MCF 10A (cell line): ENCODE measurements at regions of chr11 and their contacts with region 1.

Region 1: GRCh38 chr11:102268329-102269193 is 48.7 kb upstream of the BIRC3 start:
- DNase-seq: peak; percentile 96
- H3K4me3 Mint-ChIP-seq: peak overlapping the region; percentile 80
- H3K27ac Mint-ChIP-seq: peak overlapping the region; percentile 93
- H3K4me1 Mint-ChIP-seq: peaks cover 28% of the 10 kb centered on the region
- H3K27me3 Mint-ChIP-seq: no peaks in the 10 kb centered on the region
- CTCF ChIP-seq: peak; percentile 37

Region 2: DNA sequence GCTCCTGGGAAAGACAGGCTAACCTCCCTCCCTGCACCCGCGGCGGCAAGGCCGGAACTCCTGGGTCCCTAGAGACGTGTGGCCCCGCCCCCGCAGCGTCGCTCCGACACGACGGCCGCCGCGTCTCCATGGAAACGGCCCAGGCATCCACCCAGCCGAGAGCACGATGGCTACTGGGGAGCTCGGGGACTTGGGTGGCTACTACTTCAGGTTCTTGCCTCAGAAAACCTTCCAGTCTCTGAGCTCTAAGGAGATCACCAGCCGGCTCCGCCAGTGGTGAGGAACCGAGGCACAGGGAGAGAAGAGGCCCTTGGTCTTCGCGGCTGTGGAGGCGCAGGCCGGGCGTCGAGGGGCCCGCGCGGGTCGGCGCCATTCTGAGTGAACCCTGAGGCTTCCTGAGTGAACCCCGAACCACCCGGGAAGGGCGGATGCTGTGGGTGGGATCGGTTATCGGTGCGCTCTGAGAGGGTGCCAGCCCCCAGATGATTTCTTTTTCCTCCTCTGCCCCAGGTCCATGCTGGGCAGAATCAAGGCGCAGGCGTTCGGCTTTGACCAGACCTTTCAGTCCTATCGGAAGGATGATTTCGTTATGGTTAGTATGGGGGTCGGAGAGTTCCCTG is 221.1 kb before region 1 on chr11 and contains the start of gene CFAP300:
- CTCF ChIA-PET with region 1: interaction called, 4 read pairs
- POLR2A ChIA-PET with region 1: interaction called, 11 read pairs
- intact Hi-C with region 1: loop called (anchors 2 kb)
- DNase-seq: peak; percentile 75
- H3K4me3 Mint-ChIP-seq: peak within 1 kb of the TSS; percentile 85
- H3K27ac Mint-ChIP-seq: peak within 1 kb of the TSS; percentile 95
- H3K4me1 Mint-ChIP-seq: peaks cover 5% of the 10 kb centered on the region
- H3K27me3 Mint-ChIP-seq: no peaks in the 10 kb centered on the region
- CTCF ChIP-seq: no peak
- total RNA-seq, gene CFAP300: 8.0 and 12.9 TPM in 2 replicates

Region 3: DNA sequence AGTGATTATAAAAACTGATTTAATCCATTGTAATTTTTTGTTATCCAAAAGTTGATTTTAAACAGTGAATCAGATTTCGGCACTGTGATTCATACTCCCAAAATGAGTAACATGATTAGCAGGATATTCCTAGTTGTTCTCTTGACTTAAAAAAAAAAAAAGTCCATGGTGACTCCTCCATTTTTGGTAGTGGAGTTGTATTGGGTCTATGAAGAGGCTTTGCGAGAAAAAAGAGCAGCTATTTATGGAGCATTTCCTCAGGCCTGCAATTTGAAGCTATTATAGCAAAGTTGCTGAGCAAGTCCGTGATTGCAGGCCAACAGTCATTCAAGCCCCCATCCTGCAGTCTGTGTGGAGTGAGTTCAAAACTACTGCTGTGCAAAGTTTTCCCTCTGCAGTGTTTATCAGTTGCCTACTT is 129.5 kb before region 1 on chr11:
- CTCF ChIA-PET with region 1: interaction called, 5 read pairs
- POLR2A ChIA-PET with region 1: interaction called, 13 read pairs
- intact Hi-C with region 1: no loop called
- DNase-seq: peak; percentile 72
- H3K4me3 Mint-ChIP-seq: peak overlapping the region; percentile 55
- H3K27ac Mint-ChIP-seq: peak overlapping the region; percentile 91
- H3K4me1 Mint-ChIP-seq: peaks cover 30% of the 10 kb centered on the region
- H3K27me3 Mint-ChIP-seq: no peaks in the 10 kb centered on the region
- CTCF ChIP-seq: no peak

Region 4: DNA sequence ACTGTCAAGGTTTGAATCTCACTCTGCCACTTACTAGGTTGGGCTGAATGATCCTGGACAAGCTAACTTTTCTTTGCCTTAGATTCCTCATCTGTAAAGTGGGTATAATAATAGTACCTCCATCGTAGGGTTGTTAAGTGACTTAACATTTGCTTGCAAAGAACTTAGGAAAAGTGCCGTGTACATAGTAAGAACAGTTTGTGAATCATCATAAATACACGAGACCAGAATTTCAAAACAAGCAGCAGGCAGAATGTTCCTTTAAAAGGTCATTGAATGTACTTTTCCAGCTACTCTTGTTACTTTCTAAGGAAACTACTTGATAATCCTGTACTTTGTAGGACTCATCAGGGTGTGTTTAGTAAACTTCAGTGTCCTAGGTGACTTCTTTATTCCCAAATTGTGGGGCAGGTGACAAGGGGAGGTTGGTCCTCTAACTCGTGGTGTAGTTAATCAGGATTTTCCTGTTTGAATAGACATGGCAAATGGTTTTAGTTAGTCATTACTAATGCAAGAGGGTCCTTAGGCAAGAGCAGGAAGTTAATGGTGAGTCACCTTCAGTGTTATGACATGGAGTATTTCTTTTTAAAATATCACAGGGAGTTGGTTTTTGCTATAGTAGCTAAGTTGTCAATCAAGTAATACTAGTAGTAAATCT is 90.5 kb before region 1 on chr11:
- CTCF ChIA-PET with region 1: interaction called, 6 read pairs
- POLR2A ChIA-PET with region 1: interaction called, 46 read pairs
- intact Hi-C with region 1: no loop called
- DNase-seq: peak; percentile 92
- H3K4me3 Mint-ChIP-seq: peak overlapping the region; percentile 49
- H3K27ac Mint-ChIP-seq: peak overlapping the region; percentile 17
- H3K4me1 Mint-ChIP-seq: peaks cover 38% of the 10 kb centered on the region
- H3K27me3 Mint-ChIP-seq: no peaks in the 10 kb centered on the region
- CTCF ChIP-seq: no peak

Region 5: GRCh38 chr11:102244681-102245409 is 23.7 kb before region 1 on chr11:
- CTCF ChIA-PET with region 1: interaction called, 10 read pairs
- POLR2A ChIA-PET with region 1: interaction called, 13 read pairs
- intact Hi-C with region 1: no loop called
- DNase-seq: peak; percentile 95
- H3K4me3 Mint-ChIP-seq: no peak overlapping the region
- H3K27ac Mint-ChIP-seq: peak overlapping the region; percentile 74
- H3K4me1 Mint-ChIP-seq: peaks cover 16% of the 10 kb centered on the region
- H3K27me3 Mint-ChIP-seq: no peaks in the 10 kb centered on the region
- CTCF ChIP-seq: no peak

Region 6: GRCh38 chr11:102293873-102294601 is 25.5 kb after region 1 on chr11:
- CTCF ChIA-PET with region 1: interaction called, 29 read pairs
- POLR2A ChIA-PET with region 1: no interaction called
- intact Hi-C with region 1: no loop called
- DNase-seq: peak; percentile 70
- H3K4me3 Mint-ChIP-seq: peak overlapping the region; percentile 35
- H3K27ac Mint-ChIP-seq: peak overlapping the region; percentile 7
- H3K4me1 Mint-ChIP-seq: peaks cover 18% of the 10 kb centered on the region
- H3K27me3 Mint-ChIP-seq: no peaks in the 10 kb centered on the region
- CTCF ChIP-seq: peak; percentile 52